MCF 10A (cell line): ENCODE measurements at regions of chr11 and their contacts with region 1.

Region 1: DNA sequence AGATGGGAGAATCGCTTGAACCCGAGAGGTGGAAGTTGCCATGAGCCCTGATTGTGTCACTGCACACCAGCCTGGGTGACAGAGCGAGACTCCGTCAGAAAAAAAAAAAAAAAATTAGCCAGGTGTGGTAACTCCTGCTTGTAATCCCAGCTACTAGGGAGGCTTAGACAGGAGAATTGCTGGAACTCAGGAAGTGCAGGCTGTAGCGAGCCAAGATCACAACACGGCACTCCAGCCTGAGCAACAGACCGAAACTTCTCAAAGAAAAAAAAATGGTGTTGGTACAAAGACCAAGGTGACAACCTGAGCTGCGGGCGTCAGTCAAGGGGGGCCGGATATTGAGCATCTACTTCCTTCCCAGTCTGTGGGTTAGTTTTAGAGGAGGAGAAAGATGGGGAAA is 48.4 kb upstream of the HSPA8 start:
- DNase-seq: no peak
- H3K4me3 Mint-ChIP-seq: no peak overlapping the region
- H3K27ac Mint-ChIP-seq: no peak overlapping the region
- H3K4me1 Mint-ChIP-seq: peaks cover 5% of the 10 kb centered on the region
- H3K27me3 Mint-ChIP-seq: no peaks in the 10 kb centered on the region
- CTCF ChIP-seq: no peak

Region 2: DNA sequence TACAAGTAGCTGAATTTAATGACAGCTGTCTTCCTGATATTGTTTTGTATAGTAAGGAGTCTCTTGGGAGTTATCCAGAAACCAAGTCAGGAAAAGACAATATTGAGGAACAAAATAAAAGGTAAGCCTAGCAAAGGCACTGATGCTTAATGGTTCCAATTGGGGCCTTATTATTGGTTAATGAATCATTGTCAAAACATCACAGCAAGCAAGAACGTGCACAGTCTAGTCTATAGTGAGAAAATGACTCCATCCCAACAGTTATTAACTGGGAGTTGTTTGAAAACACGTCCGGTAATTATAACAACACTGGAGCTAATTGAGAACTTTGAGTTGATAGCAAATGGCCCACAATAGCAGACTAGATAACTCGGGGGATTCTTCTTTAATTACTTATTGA is 146.4 kb before region 1 on chr11:
- CTCF ChIA-PET with region 1: no interaction called
- POLR2A ChIA-PET with region 1: no interaction called
- intact Hi-C with region 1: no loop called
- DNase-seq: no peak
- H3K4me3 Mint-ChIP-seq: no peak overlapping the region
- H3K27ac Mint-ChIP-seq: no peak overlapping the region
- H3K4me1 Mint-ChIP-seq: no peaks in the 10 kb centered on the region
- H3K27me3 Mint-ChIP-seq: peaks cover 46% of the 10 kb centered on the region
- CTCF ChIP-seq: no peak

Region 3: GRCh38 chr11:123083623-123084029 is 26.7 kb before region 1 on chr11:
- CTCF ChIA-PET with region 1: no interaction called
- POLR2A ChIA-PET with region 1: no interaction called
- intact Hi-C with region 1: no loop called
- DNase-seq: peak; percentile 97
- H3K4me3 Mint-ChIP-seq: no peak overlapping the region
- H3K27ac Mint-ChIP-seq: peak overlapping the region; percentile 94
- H3K4me1 Mint-ChIP-seq: peaks cover 9% of the 10 kb centered on the region
- H3K27me3 Mint-ChIP-seq: no peaks in the 10 kb centered on the region
- CTCF ChIP-seq: no peak

Region 4: GRCh38 chr11:123122341-123122740 is 12.0 kb after region 1 on chr11:
- CTCF ChIA-PET with region 1: interaction called, 20 read pairs
- POLR2A ChIA-PET with region 1: interaction called, 3 read pairs
- intact Hi-C with region 1: no loop called
- DNase-seq: peak; percentile 97
- H3K4me3 Mint-ChIP-seq: peak overlapping the region; percentile 59
- H3K27ac Mint-ChIP-seq: peak overlapping the region; percentile 97
- H3K4me1 Mint-ChIP-seq: peaks cover 30% of the 10 kb centered on the region
- H3K27me3 Mint-ChIP-seq: no peaks in the 10 kb centered on the region
- CTCF ChIP-seq: no peak

Region 5: DNA sequence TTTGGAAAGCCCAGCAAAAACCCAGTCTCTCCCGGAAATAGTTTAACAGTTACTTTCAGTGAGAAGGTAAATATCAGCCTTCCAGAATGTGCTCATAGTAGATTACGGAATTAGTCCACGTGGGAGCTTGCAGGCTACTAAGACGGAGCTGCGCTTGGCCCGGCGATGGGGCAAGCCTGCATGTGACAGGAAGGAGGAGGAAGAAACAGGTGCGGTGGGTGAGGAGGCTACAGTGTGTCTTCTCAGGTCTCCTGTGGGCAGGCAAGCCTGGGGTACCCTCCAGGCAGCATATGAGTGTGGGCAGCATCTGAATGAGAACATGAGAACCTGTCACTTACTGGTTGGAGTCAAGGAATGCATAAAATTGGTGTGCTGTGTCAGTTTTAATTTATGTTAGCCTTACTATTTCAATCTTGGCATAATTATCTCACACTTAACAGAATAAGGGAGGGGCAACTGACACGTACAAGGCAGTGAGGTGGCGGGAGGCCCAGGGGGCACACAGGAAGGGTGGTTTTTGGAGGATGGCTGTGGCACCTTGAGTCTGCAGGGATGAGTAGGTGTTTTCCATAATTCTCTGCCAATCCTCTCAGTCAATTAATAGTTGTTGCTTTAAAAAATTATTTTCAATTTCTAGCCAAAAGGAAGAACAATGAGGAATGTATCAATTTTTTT is 49.0 kb after region 1 on chr11:
- CTCF ChIA-PET with region 1: interaction called, 6 read pairs
- POLR2A ChIA-PET with region 1: no interaction called
- intact Hi-C with region 1: loop called (anchors 5 kb)
- DNase-seq: peak; percentile 84
- H3K4me3 Mint-ChIP-seq: peak overlapping the region; percentile 42
- H3K27ac Mint-ChIP-seq: peak overlapping the region; percentile 86
- H3K4me1 Mint-ChIP-seq: peaks cover 42% of the 10 kb centered on the region
- H3K27me3 Mint-ChIP-seq: no peaks in the 10 kb centered on the region
- CTCF ChIP-seq: no peak

Region 6: GRCh38 chr11:123195188-123196059 is 85.1 kb after region 1 on chr11 and contains the start of gene CLMP:
- CTCF ChIA-PET with region 1: interaction called, 3 read pairs
- POLR2A ChIA-PET with region 1: interaction called, 5 read pairs
- intact Hi-C with region 1: loop called (anchors 2 kb)
- DNase-seq: peak; percentile 77
- H3K4me3 Mint-ChIP-seq: peak within 1 kb of the TSS; percentile 96
- H3K27ac Mint-ChIP-seq: peak within 1 kb of the TSS; percentile 93
- H3K4me1 Mint-ChIP-seq: peaks cover 53% of the 10 kb centered on the region
- H3K27me3 Mint-ChIP-seq: no peaks in the 10 kb centered on the region
- CTCF ChIP-seq: no peak
- total RNA-seq, gene CLMP: 86.1 and 91.9 TPM in 2 replicates

Region 7: DNA sequence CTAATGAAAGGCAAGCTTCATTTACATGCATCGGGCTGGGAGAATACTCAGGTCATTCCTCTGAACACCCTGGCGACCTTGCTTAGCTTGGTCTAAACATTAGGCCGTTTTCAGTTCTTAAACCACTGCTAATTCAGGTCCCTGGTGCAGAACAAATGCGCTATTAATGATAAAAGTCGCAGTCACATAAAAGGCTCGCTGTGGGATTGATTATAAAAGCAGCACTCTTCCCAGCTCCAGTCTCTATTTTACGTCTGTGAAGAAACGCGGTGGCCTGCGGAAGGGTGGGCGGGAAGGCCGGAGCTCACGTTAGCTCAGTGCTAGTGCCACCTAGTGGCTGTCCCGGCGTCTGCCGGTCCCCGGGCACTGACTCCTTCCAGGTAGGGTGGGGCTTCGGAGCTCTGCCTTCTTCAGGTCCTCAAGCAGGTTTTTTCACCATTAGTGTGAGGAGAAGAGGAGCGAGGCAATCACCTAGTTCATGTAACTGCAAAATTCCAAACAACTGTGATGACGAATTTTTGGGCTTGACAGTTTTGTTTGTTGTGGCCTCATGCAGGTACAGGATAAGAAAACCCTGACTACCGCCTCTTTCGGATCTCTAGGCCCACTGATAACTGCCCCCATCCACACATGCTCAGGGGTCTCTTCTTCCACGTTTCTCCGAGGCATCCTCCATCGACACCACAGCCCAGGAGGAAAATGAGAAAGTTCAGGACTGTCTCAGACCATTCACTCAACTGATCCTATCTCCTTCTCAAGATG is 151.2 kb after region 1 on chr11:
- CTCF ChIA-PET with region 1: interaction called, 69 read pairs
- POLR2A ChIA-PET with region 1: interaction called, 4 read pairs
- intact Hi-C with region 1: no loop called
- DNase-seq: peak; percentile 80
- H3K4me3 Mint-ChIP-seq: peak overlapping the region; percentile 49
- H3K27ac Mint-ChIP-seq: no peak overlapping the region
- H3K4me1 Mint-ChIP-seq: no peaks in the 10 kb centered on the region
- H3K27me3 Mint-ChIP-seq: peaks cover 25% of the 10 kb centered on the region
- CTCF ChIP-seq: peak; percentile 90